Caco-2 (cell line): ENCODE measurements at regions of chr5 and their contacts with region 1.

Region 1: DNA sequence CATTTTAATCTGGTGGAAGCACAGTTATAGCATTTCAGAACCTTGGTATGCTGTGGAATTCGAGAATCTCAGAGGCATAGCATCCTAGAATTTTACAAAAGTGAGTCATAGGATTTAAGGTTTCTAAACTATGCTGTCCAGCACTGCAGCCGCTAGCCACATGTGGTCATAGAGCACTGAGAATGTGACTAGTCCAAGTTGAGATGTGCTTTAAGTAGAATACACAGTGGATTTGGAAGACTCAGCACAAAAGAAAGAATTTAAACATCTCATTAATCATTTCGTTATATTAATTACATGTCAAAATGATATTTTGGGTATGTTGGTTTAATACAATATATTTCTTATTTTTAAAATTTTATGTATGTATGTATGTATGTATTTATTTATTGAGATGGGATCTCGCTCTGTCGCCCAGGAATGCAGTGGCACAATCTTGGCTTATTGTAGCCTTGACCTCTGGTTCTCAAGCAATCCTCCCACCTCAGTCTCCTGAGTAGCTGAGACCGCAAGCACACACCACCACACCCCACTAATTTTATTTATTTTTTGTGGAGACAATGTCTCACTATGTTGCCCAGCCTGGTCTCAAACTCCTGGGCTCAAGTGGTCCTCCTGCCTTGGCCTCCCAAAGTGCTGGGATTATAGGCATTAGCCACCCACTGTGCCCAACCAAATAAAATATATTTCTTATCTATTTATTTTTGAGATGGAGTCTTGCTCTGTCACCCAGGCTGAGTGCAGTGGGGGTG is 20.4 kb upstream of the RPS14 start:
- DNase-seq: peak in 1 of 2 experiments; percentile 15
- H3K4me3 ChIP-seq: no peak overlapping the region
- H3K4me3 Mint-ChIP-seq: no peak overlapping the region
- H3K27ac Mint-ChIP-seq: no peak overlapping the region
- H3K4me1 ChIP-seq: peaks cover 43% of the 10 kb centered on the region
- H3K4me1 Mint-ChIP-seq: peaks cover 21% of the 10 kb centered on the region
- H3K27me3 ChIP-seq: no peaks in the 10 kb centered on the region
- H3K27me3 Mint-ChIP-seq: no peaks in the 10 kb centered on the region
- CTCF ChIP-seq: no peak

Region 2: DNA sequence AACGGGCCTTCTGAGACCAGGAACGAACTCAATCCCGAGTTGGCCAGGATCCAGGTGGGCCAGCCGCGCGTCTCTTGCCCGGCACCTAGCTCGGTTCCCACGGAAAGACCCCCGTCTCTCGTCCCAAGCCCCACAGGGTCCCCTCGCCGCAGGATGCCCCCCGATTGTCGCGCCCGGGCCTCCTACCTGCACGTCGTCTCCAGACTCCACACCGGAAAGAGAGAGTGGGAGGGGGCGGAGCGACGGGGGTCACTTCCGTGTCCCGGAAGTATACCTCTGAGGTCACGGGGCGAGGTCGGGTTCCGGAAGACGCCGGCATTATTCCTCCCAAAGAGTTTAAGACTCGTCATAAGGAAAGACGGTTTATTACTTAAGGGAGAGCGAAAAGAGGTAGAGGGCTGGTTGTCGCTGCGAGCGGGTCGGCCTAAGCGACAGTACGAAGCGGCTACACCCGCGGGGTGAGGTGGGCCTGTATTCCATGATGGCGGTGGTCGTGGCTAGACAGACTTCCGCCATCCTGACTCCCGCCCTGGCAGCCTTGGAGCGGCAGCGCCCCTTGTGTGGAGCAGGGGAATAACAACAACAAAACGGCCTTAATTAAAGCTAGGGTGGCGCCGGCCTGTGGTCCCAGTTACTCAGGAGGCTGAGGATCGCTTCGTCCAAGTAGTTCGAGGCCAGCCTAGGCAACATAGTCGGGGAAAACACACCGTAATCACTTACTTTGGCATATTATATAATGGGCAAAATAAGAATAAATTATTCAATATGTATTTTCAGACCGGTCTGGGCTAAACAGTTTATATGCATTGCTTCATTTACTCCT is 20.2 kb before region 1 on chr5 and contains the start of gene RPS14:
- CTCF ChIA-PET with region 1: interaction called, 12 read pairs
- POLR2A ChIA-PET with region 1: interaction called, 5 read pairs
- intact Hi-C with region 1: no loop called
- DNase-seq: peak; percentile 93 to 95
- H3K4me3 ChIP-seq: peak within 1 kb of the TSS; percentile 66
- H3K4me3 Mint-ChIP-seq: peak within 1 kb of the TSS; percentile 89
- H3K27ac Mint-ChIP-seq: peak within 1 kb of the TSS; percentile 99
- H3K4me1 ChIP-seq: 0 out of 2 replicates have a peak, but pooled peaks cover 4% of the 10 kb centered on the region
- H3K4me1 Mint-ChIP-seq: peaks cover 8% of the 10 kb centered on the region
- H3K27me3 ChIP-seq: no peaks in the 10 kb centered on the region
- H3K27me3 Mint-ChIP-seq: no peaks in the 10 kb centered on the region
- CTCF ChIP-seq: peak; percentile 85 to 92
- total RNA-seq, gene RPS14: 2,300 and 2,382 TPM in 2 replicates

Region 3: GRCh38 chr5:150486402-150487198 is 16.7 kb after region 1 on chr5:
- CTCF ChIA-PET with region 1: interaction called, 4 read pairs
- POLR2A ChIA-PET with region 1: interaction called, 5 read pairs
- intact Hi-C with region 1: loop called (anchors 1 kb)
- DNase-seq: peak; percentile 96
- H3K4me3 ChIP-seq: peak overlapping the region; percentile 99
- H3K4me3 Mint-ChIP-seq: peak overlapping the region; percentile 66
- H3K27ac Mint-ChIP-seq: peak overlapping the region; percentile 13
- H3K4me1 ChIP-seq: peaks cover 58% of the 10 kb centered on the region
- H3K4me1 Mint-ChIP-seq: peaks cover 57% of the 10 kb centered on the region
- H3K27me3 ChIP-seq: no peaks in the 10 kb centered on the region
- H3K27me3 Mint-ChIP-seq: no peaks in the 10 kb centered on the region
- CTCF ChIP-seq: peak in 1 of 2 experiments; percentile 1

Region 4: DNA sequence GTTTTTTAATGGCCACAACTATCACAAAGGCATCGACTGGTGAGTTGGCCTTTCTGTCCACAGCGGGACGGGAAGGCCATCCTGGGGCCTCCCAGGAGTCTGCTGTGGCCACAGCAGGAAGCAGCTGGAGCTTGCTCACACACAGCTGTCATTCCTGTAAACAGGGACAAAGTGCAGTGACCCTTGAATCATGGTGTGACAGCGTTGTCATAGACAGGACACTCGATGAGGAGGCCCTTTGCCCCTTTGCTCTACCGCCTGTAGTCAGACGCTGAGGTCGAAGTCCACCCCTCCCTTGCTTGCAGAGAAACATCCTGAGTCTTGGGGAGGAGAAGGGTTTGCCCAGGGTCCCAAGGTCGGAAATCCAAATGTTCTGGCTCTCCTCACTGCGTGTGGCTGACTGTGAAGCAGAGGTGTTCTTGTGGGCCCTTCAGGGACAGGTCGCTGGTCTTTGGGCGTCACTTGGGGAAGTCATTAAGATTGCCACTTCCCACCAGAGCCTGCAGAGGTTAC is 73.1 kb after region 1 on chr5:
- CTCF ChIA-PET with region 1: interaction called, 5 read pairs
- POLR2A ChIA-PET with region 1: no interaction called
- intact Hi-C with region 1: loop called (anchors 1 kb)
- DNase-seq: peak; percentile 86 to 94
- H3K4me3 ChIP-seq: no peak overlapping the region
- H3K4me3 Mint-ChIP-seq: peak overlapping the region; percentile 42
- H3K27ac Mint-ChIP-seq: peak overlapping the region; percentile 81
- H3K4me1 ChIP-seq: peaks cover 34% of the 10 kb centered on the region
- H3K4me1 Mint-ChIP-seq: peaks cover 25% of the 10 kb centered on the region
- H3K27me3 ChIP-seq: no peaks in the 10 kb centered on the region
- H3K27me3 Mint-ChIP-seq: no peaks in the 10 kb centered on the region
- CTCF ChIP-seq: no peak

Region 5: DNA sequence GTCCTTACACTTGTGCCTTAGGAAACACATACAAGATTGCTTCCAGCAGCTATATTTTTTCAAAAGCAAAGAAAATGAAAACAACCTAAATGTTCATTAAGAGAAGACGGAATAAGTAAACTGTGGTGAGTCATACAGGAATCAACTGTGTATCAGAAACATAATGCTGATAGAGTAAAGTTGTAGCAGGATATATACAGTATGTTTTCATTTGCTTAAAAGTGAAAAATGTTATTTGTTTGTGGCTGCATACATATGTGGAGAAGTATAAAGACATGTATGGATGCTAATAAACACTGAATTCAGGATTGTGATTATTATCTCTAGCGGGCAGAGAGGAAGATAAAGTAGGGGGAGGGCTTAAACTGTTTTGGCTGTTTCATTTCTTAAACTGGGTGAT is 280.6 kb after region 1 on chr5:
- CTCF ChIA-PET with region 1: no interaction called
- POLR2A ChIA-PET with region 1: no interaction called
- intact Hi-C with region 1: no loop called
- DNase-seq: no peak
- H3K4me3 ChIP-seq: no peak overlapping the region
- H3K4me3 Mint-ChIP-seq: no peak overlapping the region
- H3K27ac Mint-ChIP-seq: no peak overlapping the region
- H3K4me1 ChIP-seq: peaks cover 3% of the 10 kb centered on the region; the same call in 1 of the 2 replicates
- H3K4me1 Mint-ChIP-seq: no peaks in the 10 kb centered on the region
- H3K27me3 ChIP-seq: no peaks in the 10 kb centered on the region
- H3K27me3 Mint-ChIP-seq: no peaks in the 10 kb centered on the region
- CTCF ChIP-seq: no peak

Region 6: GRCh38 chr5:150778517-150779396 is 308.9 kb after region 1 on chr5 and contains the start of gene SMIM3:
- CTCF ChIA-PET with region 1: no interaction called
- POLR2A ChIA-PET with region 1: no interaction called
- intact Hi-C with region 1: loop called (anchors 5 kb)
- DNase-seq: peak; percentile 86 to 89
- H3K4me3 ChIP-seq: peak within 1 kb of the TSS; percentile 75
- H3K4me3 Mint-ChIP-seq: peak within 1 kb of the TSS; percentile 91
- H3K27ac Mint-ChIP-seq: peak within 1 kb of the TSS; percentile 80
- H3K4me1 ChIP-seq: peaks cover 34% of the 10 kb centered on the region
- H3K4me1 Mint-ChIP-seq: peaks cover 32% of the 10 kb centered on the region
- H3K27me3 ChIP-seq: no peaks in the 10 kb centered on the region
- H3K27me3 Mint-ChIP-seq: no peaks in the 10 kb centered on the region
- CTCF ChIP-seq: peak; percentile 35 to 83
- total RNA-seq, gene SMIM3: 19.2 and 19.4 TPM in 2 replicates